Activated T-helper 1 cell treated with anti-CD3 and anti-CD28 coated beads, Interleukin-12 subunit alpha, Interleukin-12 subunit beta, Interleukin-2, Interleukin-4 antibody, amounts not matched to agents 30 ng/mL and 10 ng/mL and 1 ng/mL, durations not matched to agents 14 hours and 24 hours and 36 hours (primary cell): ENCODE measurements at regions of chr20 and their contacts with region 1.

Region 1: DNA sequence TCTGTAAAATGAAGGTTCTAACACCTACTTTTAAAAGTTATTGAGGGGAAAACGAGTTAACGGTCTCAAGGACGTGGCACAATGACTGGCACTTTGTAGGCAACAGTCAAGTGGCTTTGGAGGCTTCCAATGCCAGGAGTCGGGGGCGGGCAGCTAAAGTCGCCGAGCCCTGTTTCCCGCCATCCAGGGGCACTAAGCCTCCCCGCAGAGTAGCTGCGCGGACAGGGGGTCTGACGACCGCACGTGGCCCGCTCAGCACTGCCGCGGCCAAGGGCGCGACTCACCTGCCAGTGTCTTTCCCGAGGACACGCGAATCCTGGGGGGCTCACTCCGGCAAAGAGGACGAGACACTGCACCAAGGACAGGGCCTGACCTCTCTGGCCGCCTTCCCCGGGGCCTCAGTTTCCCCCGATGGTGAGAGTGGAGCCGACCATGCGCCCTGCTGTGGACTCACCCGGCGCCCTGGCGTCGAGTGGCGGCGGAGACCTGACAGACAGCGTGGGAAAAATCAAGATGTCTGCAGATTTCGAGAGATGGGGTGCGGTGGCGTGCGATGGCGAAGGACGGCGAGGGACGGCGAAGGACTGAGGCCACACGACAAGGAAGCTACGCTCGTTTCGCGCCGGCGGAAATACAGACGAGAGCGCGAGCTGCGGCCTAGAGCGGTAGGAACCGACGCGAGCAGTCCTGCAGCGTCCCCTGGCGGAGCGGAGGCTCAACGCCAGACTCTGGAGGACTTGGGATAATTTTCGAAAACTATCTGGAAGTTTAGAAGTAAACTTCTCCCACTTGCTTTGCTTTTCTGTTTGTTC is at the start of gene SNHG17:
- DNase-seq: peak; percentile 84
- H3K4me3 Mint-ChIP-seq: peak within 1 kb of the TSS; percentile 96
- H3K27ac Mint-ChIP-seq: peak within 1 kb of the TSS; percentile 96
- H3K4me1 Mint-ChIP-seq: peaks cover 25% of the 10 kb centered on the region
- H3K27me3 Mint-ChIP-seq: peaks cover 5% of the 10 kb centered on the region
- total RNA-seq, gene SNHG17: 89.8 and 104 TPM in 2 replicates

Region 2: GRCh38 chr20:38275815-38276550 is 159.0 kb before region 1 on chr20:
- intact Hi-C with region 1: no loop called
- DNase-seq: no peak
- H3K4me3 Mint-ChIP-seq: no peak overlapping the region
- H3K27ac Mint-ChIP-seq: no peak overlapping the region
- H3K4me1 Mint-ChIP-seq: no peaks in the 10 kb centered on the region
- H3K27me3 Mint-ChIP-seq: peaks cover 9% of the 10 kb centered on the region

Region 3: DNA sequence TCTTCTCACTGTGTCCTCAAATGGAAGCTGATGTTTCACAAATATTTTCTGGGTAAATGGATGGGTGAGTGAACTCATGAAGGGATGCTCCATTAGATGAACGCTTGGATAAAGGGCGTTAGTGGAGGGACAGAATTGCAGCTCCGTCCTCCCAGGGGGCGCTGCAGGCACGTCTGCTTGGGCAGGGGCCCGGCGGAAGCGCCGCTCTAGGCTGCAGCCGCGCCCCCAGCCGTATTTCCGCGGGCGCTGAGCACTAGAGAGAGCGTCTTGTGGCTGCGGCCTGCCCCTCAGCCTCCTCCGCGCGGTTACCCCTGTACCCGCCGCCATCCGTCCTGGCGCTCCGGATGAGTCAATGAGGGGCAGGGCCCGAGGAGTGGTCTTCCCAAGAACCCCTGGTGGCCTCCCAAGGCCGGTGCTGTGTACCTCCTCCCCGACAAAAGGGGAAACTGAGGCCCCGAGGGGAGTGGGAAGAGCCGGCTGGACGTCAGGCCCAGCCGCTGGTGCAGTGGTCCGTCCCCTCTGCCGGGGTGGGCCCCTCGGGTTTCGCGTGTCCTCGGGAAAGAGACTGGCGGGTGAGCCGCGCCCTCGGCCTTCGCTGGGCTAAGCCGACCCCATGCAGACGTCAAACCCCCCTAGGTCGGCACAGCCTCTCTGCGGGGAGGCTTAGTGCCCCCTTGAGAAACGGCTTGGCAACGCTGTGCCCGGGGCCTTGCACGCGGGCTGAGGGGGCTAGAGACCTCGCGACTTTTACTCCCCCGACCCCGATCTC is 11.7 kb after region 1 on chr20:
- intact Hi-C with region 1: loop called (anchors 1 kb)
- DNase-seq: peak; percentile 88
- H3K4me3 Mint-ChIP-seq: peak overlapping the region; percentile 84
- H3K27ac Mint-ChIP-seq: peak overlapping the region; percentile 80
- H3K4me1 Mint-ChIP-seq: peaks cover 38% of the 10 kb centered on the region
- H3K27me3 Mint-ChIP-seq: peaks cover 8% of the 10 kb centered on the region

Region 4: DNA sequence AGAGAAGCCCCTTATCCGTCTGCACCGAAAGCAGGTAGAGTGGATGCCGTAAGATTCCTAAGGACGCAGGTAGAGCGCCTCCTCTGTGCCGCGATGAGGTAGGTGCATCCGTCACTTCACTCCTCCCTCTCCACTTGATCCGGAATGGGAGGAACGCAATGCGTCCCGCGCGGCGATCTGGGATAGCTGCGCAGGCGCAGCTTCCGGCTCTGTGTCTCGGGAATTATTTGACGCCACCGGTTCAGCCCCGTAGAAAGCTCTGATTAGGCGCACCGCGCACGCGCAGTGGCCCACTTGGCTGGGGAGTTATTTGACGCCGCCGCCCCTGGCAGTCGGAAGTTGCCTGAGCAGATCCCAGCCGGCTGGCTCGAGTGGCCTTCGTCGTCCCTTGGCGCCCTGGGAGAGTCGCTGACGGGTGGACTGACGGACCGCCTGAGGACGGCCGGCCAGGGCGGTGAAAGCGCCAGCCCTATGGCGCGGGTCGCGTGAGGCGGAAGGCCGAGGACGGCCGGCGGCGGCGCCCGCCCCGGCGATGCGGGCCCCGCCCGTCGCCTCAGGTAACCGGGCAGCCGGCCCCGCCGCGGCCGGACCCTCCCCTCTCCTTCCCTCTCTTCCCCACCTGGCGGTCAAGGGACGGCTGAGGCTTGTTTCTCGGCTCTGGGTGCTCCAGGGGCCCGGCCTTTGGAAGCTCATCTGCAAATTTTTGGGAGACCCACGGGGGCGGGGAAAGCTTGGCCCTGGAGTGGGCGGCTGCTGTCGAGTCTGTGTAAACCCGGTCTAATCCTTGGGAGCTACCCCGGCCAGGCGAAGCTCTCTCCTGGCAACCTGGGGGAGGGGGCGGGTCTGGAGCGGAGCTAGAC is 37.8 kb after region 1 on chr20 and contains the start of gene RALGAPB:
- intact Hi-C with region 1: loop called (anchors 1 kb)
- DNase-seq: peak; percentile 97
- H3K4me3 Mint-ChIP-seq: peak within 1 kb of the TSS; percentile 88
- H3K27ac Mint-ChIP-seq: peak within 1 kb of the TSS; percentile 77
- H3K4me1 Mint-ChIP-seq: peaks cover 34% of the 10 kb centered on the region
- H3K27me3 Mint-ChIP-seq: peaks cover 2% of the 10 kb centered on the region
- total RNA-seq, gene RALGAPB: 31.0 and 32.4 TPM in 2 replicates